ENCODE measurements at regions of chr14 and their contacts with region 1.

Region 1: GRCh38 chr14:77641534-77642341 is 25.3 kb upstream of the SPTLC2 start:
- DNase-seq: peak; percentile 79 to 83
- ATAC-seq: peak; percentile 81 to 93 (median 90)
- H3K4me3 ChIP-seq: peak overlapping the region in 9 of 10 donors; percentile 36 to 62 (median 57)
- H3K27ac ChIP-seq: peak overlapping the region; percentile 64 to 93 (median 87)
- H3K4me1 ChIP-seq: peaks cover 0 to 28% (median 14%) of the 10 kb centered on the region in 9 donors
- H3K27me3 ChIP-seq: no peaks in the 10 kb centered on the region
- CTCF ChIP-seq: no peak

Region 2: GRCh38 chr14:77616454-77617229 is 25.1 kb before region 1 on chr14 and contains the start of gene SPTLC2:
- intact Hi-C with region 1: loop called in 1 of 10 experiments (anchors 2 kb)
- DNase-seq: peak; percentile 97 to 99
- ATAC-seq: peak; percentile 98 to 99 (median 99)
- H3K4me3 ChIP-seq: peak within 1 kb of the TSS; percentile 75 to 98 (median 86)
- H3K27ac ChIP-seq: peak within 1 kb of the TSS; percentile 76 to 94 (median 87)
- H3K4me1 ChIP-seq: peaks cover 3 to 48% (median 17%) of the 10 kb centered on the region in 9 donors
- H3K27me3 ChIP-seq: no peaks in the 10 kb centered on the region
- CTCF ChIP-seq: peak in 3 of 9 donors; percentile 28 to 45 (median 39)
- total RNA-seq, gene SPTLC2: 8.3 to 23.5 (median 13.3) TPM

Region 3: GRCh38 chr14:77746064-77746702 is 104.4 kb after region 1 on chr14:
- intact Hi-C with region 1: no loop called
- DNase-seq: no peak
- ATAC-seq: no peak
- H3K4me3 ChIP-seq: no peak overlapping the region
- H3K27ac ChIP-seq: no peak overlapping the region
- H3K4me1 ChIP-seq: peaks cover 0 to 6% (median 0%) of the 10 kb centered on the region in 9 donors
- H3K27me3 ChIP-seq: no peaks in the 10 kb centered on the region
- CTCF ChIP-seq: no peak